ENCODE measurements at regions of chr13 and their contacts with region 1.

Region 1: DNA sequence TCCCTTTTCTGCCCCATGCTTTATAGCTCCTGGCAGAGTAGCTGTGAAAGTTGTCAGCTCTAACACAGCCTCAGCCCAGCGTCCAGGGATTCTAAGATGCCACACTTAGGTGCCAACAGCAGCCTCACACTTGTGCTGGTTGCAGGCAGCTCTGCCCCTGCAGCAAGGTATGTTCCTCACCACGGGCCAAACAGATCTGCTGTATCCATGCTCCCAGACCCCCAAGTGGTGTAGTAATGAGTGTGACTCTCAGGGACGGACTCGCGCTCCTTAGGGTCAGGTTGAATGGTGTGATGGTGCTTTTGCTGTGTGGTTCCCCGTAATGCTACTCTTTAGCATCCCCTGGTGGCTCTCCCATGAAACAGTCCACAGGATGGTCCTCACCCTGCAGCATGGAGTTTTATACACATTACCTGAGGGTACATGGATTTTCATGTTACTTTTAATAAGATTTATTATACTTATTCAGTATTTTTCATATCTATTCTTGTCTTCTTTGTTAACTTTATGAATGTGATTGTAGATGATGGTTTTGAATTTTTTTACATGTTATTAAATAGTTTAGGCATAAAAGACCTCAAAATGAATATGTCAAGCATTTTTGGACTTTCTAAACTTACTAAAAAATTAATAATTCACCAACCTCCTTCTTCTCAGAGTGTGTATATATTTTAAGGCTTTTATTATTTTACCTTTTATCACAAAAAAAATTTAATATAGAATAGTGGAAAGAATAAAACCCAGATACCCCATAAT is 232.5 kb downstream of the SLC7A1 start:
- DNase-seq: peak; percentile 44
- ATAC-seq: peak; percentile 99
- H3K4me3 ChIP-seq: no peak overlapping the region
- H3K27ac ChIP-seq: no peak overlapping the region
- H3K4me1 ChIP-seq: no peaks in the 10 kb centered on the region
- H3K27me3 ChIP-seq: peaks cover under 1% of the 10 kb centered on the region; the same call in 1 of the 2 replicates
- CTCF ChIP-seq: peak; percentile 73
- POLR2A ChIP-seq: no peak
- RAD21 ChIP-seq: peak; percentile 58

Region 2: GRCh38 chr13:28370448-28370847 is 992.6 kb before region 1 on chr13:
- CTCF ChIA-PET with region 1: no interaction called
- POLR2A ChIA-PET with region 1: no interaction called
- dilution Hi-C with region 1: no loop called
- in situ Hi-C with region 1: no loop called
- intact Hi-C with region 1: no loop called
- DNase-seq: peak; percentile 59
- ATAC-seq: peak; percentile 54
- H3K4me3 ChIP-seq: no peak overlapping the region
- H3K27ac ChIP-seq: no peak overlapping the region
- H3K4me1 ChIP-seq: 0 out of 2 replicates have a peak, but pooled peaks cover 2% of the 10 kb centered on the region
- H3K27me3 ChIP-seq: no peaks in the 10 kb centered on the region
- CTCF ChIP-seq: no peak
- POLR2A ChIP-seq: no peak
- RAD21 ChIP-seq: no peak

Region 3: DNA sequence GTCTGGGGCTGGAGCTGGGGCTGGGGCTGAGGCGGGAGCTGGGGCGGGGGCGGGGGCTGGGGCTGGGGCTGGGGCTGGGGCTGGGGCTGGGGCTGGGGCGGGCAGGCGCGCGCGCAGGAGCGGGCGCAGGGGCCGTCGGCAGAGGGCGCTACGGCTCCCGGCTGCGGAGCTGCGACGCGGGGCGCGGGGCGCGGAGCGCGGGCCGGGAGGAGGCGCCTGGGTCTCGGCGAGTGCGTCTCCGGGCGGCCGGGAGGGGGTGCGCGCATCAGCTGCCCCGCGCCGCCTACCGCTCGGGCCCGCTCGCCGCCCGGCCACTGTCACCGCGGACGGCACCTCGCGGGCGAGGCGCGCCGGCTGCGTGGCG is 543.3 kb before region 1 on chr13:
- CTCF ChIA-PET with region 1: no interaction called
- POLR2A ChIA-PET with region 1: no interaction called
- dilution Hi-C with region 1: no loop called
- in situ Hi-C with region 1: loop called (anchors 25 kb)
- intact Hi-C with region 1: loop called (anchors 2 kb)
- DNase-seq: peak; percentile 32
- ATAC-seq: peak; percentile 96
- H3K4me3 ChIP-seq: peak overlapping the region; percentile 47
- H3K27ac ChIP-seq: no peak overlapping the region
- H3K4me1 ChIP-seq: peaks cover 6% of the 10 kb centered on the region
- H3K27me3 ChIP-seq: peaks cover 39% of the 10 kb centered on the region
- CTCF ChIP-seq: peak; percentile 44
- POLR2A ChIP-seq: no peak
- RAD21 ChIP-seq: 0 out of 2 replicates have a peak, but pooled peaks have one; percentile 20

Measured in IMR-90 (cell line).